Pancreas (tissue), 10 donors: ENCODE measurements at regions of chr1 and their contacts with region 1.

Region 1: GRCh38 chr1:235253219-235253962 is 74.6 kb downstream of the ARID4B start:
- DNase-seq: peak in 4 of 6 donors; percentile 41 to 73 (median 54)
- ATAC-seq: peak; percentile 85 to 96 (median 93)
- H3K4me3 ChIP-seq: no peak overlapping the region
- H3K27ac ChIP-seq: no peak overlapping the region
- H3K4me1 ChIP-seq: peaks cover 0 to 13% (median 0%) of the 10 kb centered on the region in 3 donors
- H3K27me3 ChIP-seq: no peaks in the 10 kb centered on the region
- CTCF ChIP-seq: peak; percentile 37 to 68 (median 63)

Region 2: DNA sequence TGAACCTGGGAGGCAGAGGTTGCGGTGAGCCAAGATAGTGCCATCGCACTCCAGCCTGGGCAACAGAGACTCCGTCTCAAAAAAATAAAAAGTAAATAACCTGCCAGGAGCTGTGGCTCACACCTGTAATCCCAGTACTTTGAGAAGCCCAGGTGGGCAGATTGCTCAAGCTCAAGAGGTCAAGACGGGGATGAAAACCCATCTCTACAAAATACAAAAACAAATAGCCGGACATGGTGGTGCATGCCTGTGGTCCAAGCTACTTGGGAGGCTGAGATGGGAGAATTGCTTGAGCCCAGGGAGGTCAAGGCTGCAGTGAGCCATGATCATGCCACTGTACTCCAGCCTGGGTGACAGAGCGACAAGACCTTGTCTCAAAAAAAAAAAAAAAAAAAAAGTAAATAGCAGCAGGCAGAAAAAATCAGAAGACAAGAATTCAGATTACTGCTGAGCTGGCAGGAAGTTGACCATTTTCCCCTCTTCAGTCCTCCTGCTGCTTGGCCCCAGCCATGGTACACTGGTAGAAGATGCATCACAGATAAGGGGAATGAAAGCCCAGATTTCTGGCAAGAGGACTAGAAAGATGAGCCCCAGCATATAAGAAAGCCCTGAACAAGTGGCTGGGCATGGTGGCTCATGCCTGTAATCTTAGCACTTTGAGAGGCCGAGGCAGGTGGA is 222.3 kb before region 1 on chr1:
- intact Hi-C with region 1: no loop called
- DNase-seq: no peak
- ATAC-seq: no peak
- H3K4me3 ChIP-seq: no peak overlapping the region
- H3K27ac ChIP-seq: no peak overlapping the region
- H3K4me1 ChIP-seq: no peaks in the 10 kb centered on the region
- H3K27me3 ChIP-seq: no peaks in the 10 kb centered on the region
- CTCF ChIP-seq: no peak

Region 3: DNA sequence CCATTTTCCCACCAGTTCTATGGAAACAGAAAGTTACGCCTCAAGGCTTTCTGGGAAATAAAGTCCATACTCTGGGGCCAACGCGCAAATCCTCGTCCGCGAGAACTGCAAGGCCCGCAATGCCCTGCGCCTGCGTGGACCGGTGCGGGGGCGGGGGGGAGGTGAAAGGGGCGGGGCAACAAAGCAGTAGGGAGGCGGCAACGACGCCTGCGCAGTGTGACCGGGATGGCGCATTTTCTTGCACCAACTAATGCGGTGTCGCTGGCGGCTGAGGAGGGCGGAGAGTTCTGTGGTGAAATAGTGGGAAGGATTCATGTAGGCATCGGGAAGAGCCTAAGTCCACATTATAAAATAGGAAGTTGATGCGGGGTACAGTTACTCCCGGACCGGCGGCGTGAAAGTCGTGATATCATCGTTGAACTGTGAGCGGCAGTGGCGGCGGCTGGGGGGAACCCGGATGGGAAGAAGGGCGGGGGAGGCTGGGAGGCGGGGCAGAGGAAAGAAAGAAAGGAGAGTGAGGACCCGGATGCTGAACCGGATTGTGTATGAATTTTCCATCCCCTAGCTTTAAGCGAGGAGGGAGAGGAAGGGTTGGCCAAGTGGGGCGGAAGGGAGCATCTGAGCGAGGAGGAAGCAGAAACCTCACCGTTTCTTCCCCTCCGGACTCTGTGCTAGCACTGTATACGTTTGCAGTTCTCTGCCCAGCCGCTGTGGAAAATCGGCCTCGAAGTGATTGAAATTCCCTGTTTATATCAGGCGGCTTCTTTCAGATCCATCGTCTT is 75.2 kb after region 1 on chr1 and contains the start of gene GGPS1:
- intact Hi-C with region 1: loop called in 1 of 3 experiments (anchors 10 kb)
- DNase-seq: peak; percentile 97 to 99 (median 98)
- ATAC-seq: peak; percentile 86 to 93 (median 88)
- H3K4me3 ChIP-seq: peak within 1 kb of the TSS; percentile 73 to 99 (median 94)
- H3K27ac ChIP-seq: peak within 1 kb of the TSS; percentile 87 to 99 (median 92)
- H3K4me1 ChIP-seq: peaks cover 23 to 52% (median 42%) of the 10 kb centered on the region in 3 donors
- H3K27me3 ChIP-seq: no peaks in the 10 kb centered on the region
- CTCF ChIP-seq: no peak
- total RNA-seq, gene GGPS1: 8.9 to 16.7 (median 12.5) TPM

Region 4: DNA sequence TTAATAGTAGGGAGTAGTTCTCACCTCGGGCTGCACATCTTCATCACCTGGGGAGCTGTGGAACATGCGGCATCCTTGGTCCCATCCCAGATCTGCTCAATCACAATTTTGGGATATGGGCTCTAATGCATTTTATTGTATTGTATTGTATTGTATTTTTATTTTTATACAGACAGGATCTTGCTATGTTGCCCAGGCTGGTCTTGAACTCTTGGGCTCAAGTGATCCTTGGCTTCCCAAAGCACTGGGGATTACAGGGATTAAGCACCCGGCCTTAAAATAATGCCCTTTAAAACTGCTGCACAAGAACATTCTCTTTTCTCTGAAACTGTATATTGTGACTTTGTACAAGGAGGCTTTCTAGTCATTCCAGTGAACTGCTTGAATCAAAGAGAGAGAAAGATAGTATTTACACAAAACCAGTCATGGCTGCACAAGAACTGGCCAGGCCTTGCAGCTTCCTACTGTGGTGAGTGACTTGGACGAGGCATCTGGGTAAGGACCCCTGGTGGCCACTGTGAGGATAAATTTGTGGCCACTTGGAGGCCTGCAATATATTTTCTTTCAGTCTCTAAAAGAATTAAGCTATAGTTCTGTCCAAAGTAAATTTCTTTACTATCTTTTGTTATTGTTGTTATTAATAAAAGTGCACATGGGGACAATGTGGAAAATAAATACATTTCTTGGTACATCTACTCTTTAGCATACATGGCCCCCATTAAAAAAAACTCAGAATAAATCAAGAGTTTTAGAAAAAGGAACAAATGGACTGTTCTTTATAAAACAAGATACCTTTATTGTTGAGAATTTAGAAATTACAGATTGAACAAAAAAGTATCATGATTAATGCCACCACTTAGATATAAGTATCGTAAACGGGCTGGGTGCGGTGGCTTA is 161.9 kb after region 1 on chr1:
- intact Hi-C with region 1: loop called in 1 of 3 experiments (anchors 10 kb)
- DNase-seq: peak; percentile 48 to 75 (median 58)
- ATAC-seq: peak; percentile 78 to 93 (median 91)
- H3K4me3 ChIP-seq: no peak overlapping the region
- H3K27ac ChIP-seq: no peak overlapping the region
- H3K4me1 ChIP-seq: no peaks in the 10 kb centered on the region
- H3K27me3 ChIP-seq: no peaks in the 10 kb centered on the region
- CTCF ChIP-seq: peak in 3 of 4 donors; percentile 60 to 85 (median 65)